ENCODE measurements at regions of chr16 and their contacts with region 1.

Region 1: GRCh38 chr16:84593825-84594724 is 23.8 kb downstream of the COTL1 start:
- DNase-seq: peak; percentile 83 to 95 (median 85)
- H3K4me3 ChIP-seq: peak overlapping the region; percentile 62 to 64
- H3K4me3 Mint-ChIP-seq: peak overlapping the region; percentile 88 to 93 (median 90)
- H3K27ac ChIP-seq: peak overlapping the region; percentile 81
- H3K27ac Mint-ChIP-seq: peak overlapping the region; percentile 95 to 99 (median 98)
- H3K4me1 ChIP-seq: peaks cover 70% of the 10 kb centered on the region
- H3K4me1 Mint-ChIP-seq: peaks cover 47 to 73% (median 65%) of the 10 kb centered on the region in 4 donors
- H3K27me3 ChIP-seq: no peaks in the 10 kb centered on the region
- H3K27me3 Mint-ChIP-seq: no peaks in the 10 kb centered on the region

Region 2: GRCh38 chr16:84484579-84485254 is 109.4 kb before region 1 on chr16:
- CTCF ChIA-PET with region 1: no interaction called
- POLR2A ChIA-PET with region 1: no interaction called
- intact Hi-C with region 1: no loop called
- DNase-seq: no peak
- H3K4me3 ChIP-seq: no peak overlapping the region
- H3K4me3 Mint-ChIP-seq: no peak overlapping the region
- H3K27ac ChIP-seq: no peak overlapping the region
- H3K27ac Mint-ChIP-seq: no peak overlapping the region
- H3K4me1 ChIP-seq: no peaks in the 10 kb centered on the region
- H3K4me1 Mint-ChIP-seq: no peaks in the 10 kb centered on the region
- H3K27me3 ChIP-seq: no peaks in the 10 kb centered on the region
- H3K27me3 Mint-ChIP-seq: no peaks in the 10 kb centered on the region

Region 3: DNA sequence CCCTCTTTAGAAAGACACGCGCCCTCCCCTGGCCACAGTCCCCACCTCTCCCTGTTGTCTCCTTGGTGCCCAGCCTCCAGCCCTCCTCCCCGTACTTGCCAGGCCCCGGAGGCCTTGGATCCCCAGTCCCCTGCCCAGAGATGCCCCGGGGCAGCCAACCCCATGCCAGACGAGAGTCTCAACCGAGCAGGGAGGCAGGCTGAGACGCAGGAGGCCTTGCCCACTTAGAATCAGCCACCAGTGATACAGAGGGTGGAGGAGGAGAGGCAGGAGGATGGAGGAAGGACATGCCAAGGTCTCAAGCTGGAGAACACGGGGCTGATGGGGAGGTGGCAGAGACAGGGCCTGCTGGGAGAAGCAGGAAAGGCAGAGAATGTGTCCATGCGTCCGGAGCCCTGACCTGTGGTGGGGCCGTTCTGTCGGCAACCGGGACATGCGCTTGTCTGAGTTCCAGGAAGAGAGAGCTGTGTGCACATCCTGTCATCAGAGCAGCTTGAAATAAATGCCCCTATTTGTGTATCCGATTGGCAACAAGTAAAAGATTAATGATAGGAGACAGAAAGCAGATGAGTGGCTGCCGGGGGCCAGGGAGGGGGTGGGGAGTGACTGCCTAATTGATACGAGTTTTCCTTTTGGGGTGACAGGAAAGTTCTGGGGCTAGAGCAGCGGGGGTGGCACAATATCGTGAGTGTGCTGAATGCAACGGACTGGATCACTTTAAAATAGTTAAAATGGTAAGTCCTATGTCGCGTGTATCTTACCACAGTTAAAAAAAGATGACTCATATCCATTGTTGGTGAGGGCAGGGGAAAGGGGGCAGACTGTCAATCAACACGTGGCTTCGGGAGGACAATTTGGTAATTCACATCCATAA is 44.9 kb before region 1 on chr16:
- CTCF ChIA-PET with region 1: interaction called, 7 read pairs
- POLR2A ChIA-PET with region 1: interaction called, 245 read pairs
- intact Hi-C with region 1: no loop called
- DNase-seq: peak; percentile 63 to 74 (median 70)
- H3K4me3 ChIP-seq: peak overlapping the region; percentile 49 to 60
- H3K4me3 Mint-ChIP-seq: peak overlapping the region; percentile 84 to 96 (median 91)
- H3K27ac ChIP-seq: peak overlapping the region; percentile 81
- H3K27ac Mint-ChIP-seq: peak overlapping the region; percentile 91 to 99 (median 97)
- H3K4me1 ChIP-seq: peaks cover 78% of the 10 kb centered on the region
- H3K4me1 Mint-ChIP-seq: peaks cover 51 to 77% (median 63%) of the 10 kb centered on the region in 4 donors
- H3K27me3 ChIP-seq: no peaks in the 10 kb centered on the region
- H3K27me3 Mint-ChIP-seq: no peaks in the 10 kb centered on the region

Region 4: DNA sequence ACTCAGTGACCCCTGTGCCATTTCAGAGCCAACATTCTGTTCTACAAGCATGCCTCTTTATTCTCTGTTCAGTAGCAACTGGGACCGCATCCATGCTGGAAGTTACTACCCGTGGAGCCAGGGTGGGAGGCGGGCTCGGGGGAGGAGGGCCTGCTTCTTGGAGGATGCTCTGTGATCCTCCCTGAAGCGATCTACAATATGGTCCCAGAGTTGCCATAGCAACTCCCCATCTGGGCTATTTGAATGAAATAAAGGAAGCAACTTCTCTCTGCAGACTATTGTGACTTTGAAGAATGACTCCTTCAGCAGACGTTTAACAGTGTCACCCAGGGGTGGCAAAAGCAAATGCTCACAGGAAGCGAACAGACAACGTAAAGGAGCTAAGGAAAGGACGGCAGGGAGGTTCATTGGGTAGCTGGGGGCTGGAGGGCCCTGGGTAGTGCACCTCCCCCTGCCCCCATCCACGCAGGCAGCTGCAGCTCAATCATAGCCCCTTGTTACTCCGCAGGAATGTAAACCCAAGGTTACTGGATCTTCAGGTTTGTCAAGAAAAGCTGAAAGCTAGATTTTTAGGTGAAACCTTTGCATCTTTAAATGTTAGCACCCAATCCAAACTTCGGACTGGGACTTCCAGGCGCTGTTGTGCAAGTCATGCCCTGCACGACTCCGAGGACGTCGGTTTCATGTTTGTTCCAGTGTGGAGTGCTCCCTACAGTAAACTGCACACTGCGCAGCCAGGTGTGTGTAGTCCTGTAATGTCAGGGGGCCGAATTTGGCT is 38.5 kb before region 1 on chr16:
- CTCF ChIA-PET with region 1: interaction called, 7 read pairs
- POLR2A ChIA-PET with region 1: interaction called, 245 read pairs
- intact Hi-C with region 1: no loop called
- DNase-seq: no peak
- H3K4me3 ChIP-seq: no peak overlapping the region
- H3K4me3 Mint-ChIP-seq: peak overlapping the region in 2 of 8 donors; percentile 11 to 24
- H3K27ac ChIP-seq: no peak overlapping the region
- H3K27ac Mint-ChIP-seq: peak overlapping the region in 5 of 7 donors; percentile 55 to 87 (median 86)
- H3K4me1 ChIP-seq: peaks cover 49% of the 10 kb centered on the region
- H3K4me1 Mint-ChIP-seq: peaks cover 30 to 51% (median 42%) of the 10 kb centered on the region in 4 donors
- H3K27me3 ChIP-seq: no peaks in the 10 kb centered on the region
- H3K27me3 Mint-ChIP-seq: no peaks in the 10 kb centered on the region